Ovary (tissue), 10 donors: ENCODE measurements at regions of chr2 and their contacts with region 1.

Region 1: GRCh38 chr2:47767880-47768609 is 14.9 kb upstream of the MSH6 start:
- DNase-seq: peak; percentile 60 to 86 (median 74)
- H3K4me3 ChIP-seq: no peak overlapping the region
- H3K27ac ChIP-seq: no peak overlapping the region
- H3K4me1 ChIP-seq: no peaks in the 10 kb centered on the region
- H3K27me3 ChIP-seq: no peaks in the 10 kb centered on the region
- CTCF ChIP-seq: peak; percentile 90 to 98 (median 96)
- EP300 ChIP-seq: no peak
- POLR2A ChIP-seq: no peak

Region 2: DNA sequence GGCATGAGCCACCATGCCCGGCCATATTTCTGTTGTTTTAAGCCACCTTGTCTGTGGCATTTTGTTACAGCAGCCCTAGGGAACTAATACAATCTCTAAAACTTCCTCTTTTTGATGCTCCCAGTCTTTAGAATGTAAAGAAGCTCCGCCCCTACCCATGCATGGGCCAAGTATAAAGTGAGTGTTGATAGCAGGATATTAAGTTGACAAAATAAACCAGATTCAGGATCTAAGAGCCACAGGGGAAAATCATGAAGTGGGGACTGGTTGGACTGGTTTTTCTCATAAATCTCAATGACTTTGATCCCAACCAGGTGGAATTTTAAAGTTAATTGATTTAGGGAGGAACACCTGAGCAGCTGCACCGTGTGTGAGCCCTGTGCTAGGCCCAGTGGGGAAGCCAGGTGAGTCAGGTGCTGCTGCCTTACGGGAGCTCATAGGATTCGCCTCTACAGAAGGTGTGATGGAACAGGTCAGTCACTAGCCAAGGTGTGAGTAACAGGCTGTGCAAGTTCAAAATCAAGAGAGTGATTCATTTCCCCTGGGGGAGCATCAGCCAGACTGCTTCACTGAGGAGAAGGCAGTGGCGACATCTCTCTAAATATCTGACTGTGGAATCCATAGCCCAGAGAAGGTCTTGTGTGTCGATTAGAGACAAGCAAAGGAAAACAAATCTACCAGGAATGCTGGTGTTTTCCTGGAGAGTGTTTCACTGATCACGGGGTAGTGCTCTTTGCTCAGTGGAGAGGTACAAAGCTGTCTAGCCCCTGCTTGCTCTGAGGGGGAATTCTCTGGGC is 428.1 kb before region 1 on chr2:
- intact Hi-C with region 1: loop called in 2 of 4 experiments (anchors 5 to 10 kb)
- DNase-seq: no peak
- H3K4me3 ChIP-seq: no peak overlapping the region
- H3K27ac ChIP-seq: no peak overlapping the region
- H3K4me1 ChIP-seq: no peaks in the 10 kb centered on the region
- H3K27me3 ChIP-seq: no peaks in the 10 kb centered on the region
- CTCF ChIP-seq: no peak
- EP300 ChIP-seq: no peak
- POLR2A ChIP-seq: no peak

Region 3: DNA sequence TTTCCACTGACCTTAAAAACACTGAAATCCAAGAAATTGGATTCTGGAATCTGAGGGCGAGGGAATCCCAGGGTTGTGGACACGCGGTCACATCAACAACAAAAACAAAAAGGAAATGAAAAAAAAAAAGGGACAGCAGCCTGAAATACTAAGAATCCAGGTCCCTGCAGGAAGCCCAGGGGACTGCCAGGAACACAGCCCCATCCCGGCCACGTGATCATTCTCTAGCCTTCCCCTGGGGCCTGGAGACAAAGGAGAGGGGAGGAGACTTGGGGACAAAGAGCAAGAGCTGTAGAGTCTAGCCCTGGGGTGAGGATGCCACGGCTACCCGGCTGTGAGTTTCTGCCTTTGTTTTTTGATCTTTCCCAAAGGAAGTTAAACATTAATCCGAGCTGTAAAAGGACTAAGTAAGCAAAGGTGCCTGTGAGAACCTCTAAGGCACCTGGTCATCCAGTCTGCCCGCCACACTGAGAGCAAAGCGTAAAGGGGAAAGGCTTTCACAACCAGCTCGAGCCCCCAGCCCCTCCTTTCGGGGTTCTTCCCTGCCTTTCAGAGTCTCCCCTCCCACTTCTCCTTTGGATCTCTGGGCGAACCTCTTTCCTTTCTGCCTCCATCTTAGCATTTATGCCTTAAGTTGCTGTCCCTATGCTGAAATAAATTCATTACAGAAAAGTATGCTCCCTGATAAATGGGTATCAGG is 423.0 kb before region 1 on chr2:
- intact Hi-C with region 1: loop called in 1 of 4 experiments (anchors 10 kb)
- DNase-seq: peak; percentile 52 to 73 (median 57)
- H3K4me3 ChIP-seq: peak overlapping the region; percentile 28
- H3K27ac ChIP-seq: peak overlapping the region in 1 of 2 donors; percentile 68
- H3K4me1 ChIP-seq: no peaks in the 10 kb centered on the region
- H3K27me3 ChIP-seq: no peaks in the 10 kb centered on the region
- CTCF ChIP-seq: peak in 1 of 3 donors; percentile 11
- EP300 ChIP-seq: no peak
- POLR2A ChIP-seq: no peak

Region 4: GRCh38 chr2:47437287-47437686 is 330.8 kb before region 1 on chr2:
- intact Hi-C with region 1: loop called in 3 of 4 experiments (anchors 5 to 10 kb)
- DNase-seq: no peak
- H3K4me3 ChIP-seq: no peak overlapping the region
- H3K27ac ChIP-seq: no peak overlapping the region
- H3K4me1 ChIP-seq: peaks cover 1% of the 10 kb centered on the region
- H3K27me3 ChIP-seq: no peaks in the 10 kb centered on the region
- CTCF ChIP-seq: peak in 1 of 3 donors; percentile 45
- EP300 ChIP-seq: no peak
- POLR2A ChIP-seq: no peak

Region 5: GRCh38 chr2:48092846-48093803 is 325.1 kb after region 1 on chr2:
- intact Hi-C with region 1: loop called in 1 of 4 experiments (anchors 10 kb)
- DNase-seq: no peak
- H3K4me3 ChIP-seq: no peak overlapping the region
- H3K27ac ChIP-seq: no peak overlapping the region
- H3K4me1 ChIP-seq: no peaks in the 10 kb centered on the region
- H3K27me3 ChIP-seq: no peaks in the 10 kb centered on the region
- CTCF ChIP-seq: no peak
- EP300 ChIP-seq: no peak
- POLR2A ChIP-seq: no peak

Region 6: DNA sequence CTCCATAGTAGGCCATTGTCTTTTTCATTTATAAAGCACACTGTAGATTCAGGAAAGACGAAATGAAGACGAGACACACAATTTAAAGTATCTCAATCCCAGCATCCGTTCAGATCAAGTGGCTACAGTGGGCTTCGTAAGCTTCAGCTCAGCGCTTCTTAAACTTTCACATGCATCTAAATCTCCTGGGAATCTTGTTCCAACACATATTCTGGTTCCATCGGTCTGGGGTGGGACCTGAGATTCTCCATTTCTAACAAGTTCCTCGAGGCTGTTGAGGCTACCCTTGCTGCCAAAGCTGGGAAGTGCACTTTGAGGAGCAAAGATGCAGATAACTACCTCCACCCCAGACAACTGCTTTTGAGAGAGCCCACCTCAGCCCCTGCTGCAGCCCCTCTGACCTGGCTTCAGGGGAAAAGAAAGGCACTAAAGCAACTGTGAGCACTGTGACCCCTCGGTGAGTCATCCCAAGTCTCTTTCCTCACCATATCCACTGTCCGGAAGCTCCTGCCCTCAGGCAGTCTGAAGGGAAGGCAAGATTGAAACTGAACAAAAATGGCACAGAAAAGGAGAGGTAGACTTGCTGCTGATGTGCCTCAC is 339.4 kb after region 1 on chr2:
- intact Hi-C with region 1: loop called in 1 of 4 experiments (anchors 10 kb)
- DNase-seq: peak in 1 of 5 donors; percentile 15
- H3K4me3 ChIP-seq: no peak overlapping the region
- H3K27ac ChIP-seq: no peak overlapping the region
- H3K4me1 ChIP-seq: no peaks in the 10 kb centered on the region
- H3K27me3 ChIP-seq: no peaks in the 10 kb centered on the region
- CTCF ChIP-seq: no peak
- EP300 ChIP-seq: no peak
- POLR2A ChIP-seq: no peak